ENCODE measurements at regions of chr17 and their contacts with region 1.

Region 1: GRCh38 chr17:3298260-3298659 is at the start of gene OR3A1:
- DNase-seq: no peak
- ATAC-seq: no peak
- H3K4me3 ChIP-seq: no peak within 1 kb of the TSS
- H3K27ac ChIP-seq: no peak within 1 kb of the TSS
- H3K4me1 ChIP-seq: no peaks in the 10 kb centered on the region
- H3K27me3 ChIP-seq: peaks cover 33% of the 10 kb centered on the region
- CTCF ChIP-seq: no peak
- total RNA-seq, gene OR3A1: not detected in 2 replicates

Region 2: DNA sequence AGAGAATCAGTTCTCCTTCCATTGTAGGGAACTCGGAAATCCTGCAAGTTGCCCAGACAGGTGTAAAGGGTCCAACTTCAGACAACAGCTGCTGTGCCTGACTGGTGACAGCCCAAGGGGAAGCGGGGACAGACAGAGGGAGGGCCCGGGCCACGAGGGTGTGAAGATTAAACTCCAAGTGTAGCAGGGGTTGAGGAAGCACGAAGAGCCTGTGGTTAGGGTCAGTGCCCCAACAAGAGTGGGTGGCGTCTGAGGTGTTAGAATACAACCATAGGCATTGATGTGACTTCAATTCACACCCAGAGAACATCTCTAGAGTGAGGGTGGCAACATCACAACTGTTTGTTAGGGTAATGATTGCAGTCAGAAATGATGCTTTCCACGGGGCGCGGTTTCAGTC is 216.6 kb after region 1 on chr17:
- CTCF ChIA-PET with region 1: no interaction called
- POLR2A ChIA-PET with region 1: no interaction called
- intact Hi-C with region 1: no loop called
- DNase-seq: no peak
- ATAC-seq: no peak
- H3K4me3 ChIP-seq: no peak overlapping the region
- H3K27ac ChIP-seq: no peak overlapping the region
- H3K4me1 ChIP-seq: no peaks in the 10 kb centered on the region
- H3K27me3 ChIP-seq: no peaks in the 10 kb centered on the region
- CTCF ChIP-seq: no peak

Region 3: GRCh38 chr17:3551189-3551588 is 252.9 kb after region 1 on chr17:
- CTCF ChIA-PET with region 1: interaction called, 11 read pairs
- POLR2A ChIA-PET with region 1: no interaction called
- intact Hi-C with region 1: no loop called
- DNase-seq: no peak
- ATAC-seq: no peak; the same call in 1 of the 2 replicates
- H3K4me3 ChIP-seq: no peak overlapping the region
- H3K27ac ChIP-seq: peak overlapping the region; percentile 54
- H3K4me1 ChIP-seq: peaks cover 8% of the 10 kb centered on the region; the same call in 1 of the 2 replicates
- H3K27me3 ChIP-seq: no peaks in the 10 kb centered on the region
- CTCF ChIP-seq: no peak

Measured in PC-3 (cell line).